H1 (cell line): ENCODE measurements at regions of chr13 and their contacts with region 1.

Region 1: GRCh38 chr13:21326155-21327031 is 132.7 kb downstream of the ZDHHC20 start:
- DNase-seq: peak; percentile 69 to 83
- H3K4me3 ChIP-seq: peak overlapping the region; percentile 37 to 60 (median 48)
- H3K27ac ChIP-seq: peak overlapping the region; percentile 88
- H3K4me1 ChIP-seq: peaks cover 19 to 32% (median 21%) of the 10 kb centered on the region in 4 experiments
- H3K27me3 ChIP-seq: peaks cover 0 to 2% (median 0%) of the 10 kb centered on the region in 4 experiments; a peak in 2 of 7 replicates
- CTCF ChIP-seq: no peak
- EP300 ChIP-seq: 0 out of 3 replicates have a peak, but pooled peaks of 1 of the 2 experiments have one; percentile 45
- POLR2A ChIP-seq: peak; percentile 57 to 83
- RAD21 ChIP-seq: peak in 1 of 2 experiments; percentile 30; a peak in 2 of 4 replicates

Region 2: GRCh38 chr13:21310221-21310620 is 16.2 kb before region 1 on chr13:
- CTCF ChIA-PET with region 1: interaction called, 10 read pairs
- POLR2A ChIA-PET with region 1: interaction called, 16 read pairs
- DNase-seq: no peak
- H3K4me3 ChIP-seq: no peak overlapping the region
- H3K27ac ChIP-seq: no peak overlapping the region
- H3K4me1 ChIP-seq: peaks cover 2 to 5% (median 3%) of the 10 kb centered on the region in 4 experiments; a peak in 4 of 7 replicates
- H3K27me3 ChIP-seq: no peaks in the 10 kb centered on the region
- CTCF ChIP-seq: no peak
- EP300 ChIP-seq: no peak
- POLR2A ChIP-seq: no peak
- RAD21 ChIP-seq: no peak

Region 3: DNA sequence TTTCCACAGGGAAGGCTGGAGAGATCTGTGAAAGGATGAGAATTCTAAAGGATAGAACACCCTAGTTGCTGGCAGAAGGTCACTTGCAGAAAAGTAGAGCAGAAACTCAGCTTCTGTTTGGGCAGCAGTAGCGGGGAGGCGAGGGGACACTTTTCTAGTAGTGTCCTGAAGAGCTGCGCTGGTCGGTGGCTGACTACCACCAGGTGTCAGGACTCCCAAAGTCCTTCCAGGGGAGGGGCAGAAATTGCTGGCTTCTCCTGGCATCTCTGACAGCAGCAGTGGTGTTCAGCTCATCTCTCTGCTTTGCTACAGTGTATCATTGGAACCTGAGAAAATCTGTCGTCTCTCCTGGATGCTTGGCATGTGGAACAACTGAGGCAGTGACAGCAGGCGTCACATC is 11.8 kb after region 1 on chr13:
- CTCF ChIA-PET with region 1: interaction called, 14 read pairs
- POLR2A ChIA-PET with region 1: interaction called, 68 read pairs
- DNase-seq: no peak
- H3K4me3 ChIP-seq: no peak overlapping the region
- H3K27ac ChIP-seq: no peak overlapping the region
- H3K4me1 ChIP-seq: peaks cover 3 to 22% (median 14%) of the 10 kb centered on the region in 4 experiments
- H3K27me3 ChIP-seq: no peaks in the 10 kb centered on the region; a peak in 1 of 7 replicates
- CTCF ChIP-seq: peak; percentile 19 to 46 (median 20); a peak in 2 of 4 replicates
- EP300 ChIP-seq: no peak
- POLR2A ChIP-seq: no peak
- RAD21 ChIP-seq: peak; percentile 22 to 42; a peak in 3 of 4 replicates

Region 4: GRCh38 chr13:21458813-21459701 is 132.7 kb after region 1 on chr13 and contains the start of gene ZDHHC20:
- CTCF ChIA-PET with region 1: no interaction called
- POLR2A ChIA-PET with region 1: interaction called, 13 read pairs
- DNase-seq: peak; percentile 46 to 98
- H3K4me3 ChIP-seq: peak within 1 kb of the TSS; percentile 87 to 99 (median 97)
- H3K27ac ChIP-seq: peak within 1 kb of the TSS; percentile 94
- H3K4me1 ChIP-seq: peaks cover 0 to 12% (median 6%) of the 10 kb centered on the region in 4 experiments; a peak in 4 of 7 replicates
- H3K27me3 ChIP-seq: no peaks in the 10 kb centered on the region
- CTCF ChIP-seq: no peak
- EP300 ChIP-seq: no peak
- POLR2A ChIP-seq: peak; percentile 38 to 60; a peak in 2 of 3 replicates
- RAD21 ChIP-seq: no peak
- total RNA-seq, gene ZDHHC20: 80.7 and 89.0 TPM in 2 replicates

Region 5: DNA sequence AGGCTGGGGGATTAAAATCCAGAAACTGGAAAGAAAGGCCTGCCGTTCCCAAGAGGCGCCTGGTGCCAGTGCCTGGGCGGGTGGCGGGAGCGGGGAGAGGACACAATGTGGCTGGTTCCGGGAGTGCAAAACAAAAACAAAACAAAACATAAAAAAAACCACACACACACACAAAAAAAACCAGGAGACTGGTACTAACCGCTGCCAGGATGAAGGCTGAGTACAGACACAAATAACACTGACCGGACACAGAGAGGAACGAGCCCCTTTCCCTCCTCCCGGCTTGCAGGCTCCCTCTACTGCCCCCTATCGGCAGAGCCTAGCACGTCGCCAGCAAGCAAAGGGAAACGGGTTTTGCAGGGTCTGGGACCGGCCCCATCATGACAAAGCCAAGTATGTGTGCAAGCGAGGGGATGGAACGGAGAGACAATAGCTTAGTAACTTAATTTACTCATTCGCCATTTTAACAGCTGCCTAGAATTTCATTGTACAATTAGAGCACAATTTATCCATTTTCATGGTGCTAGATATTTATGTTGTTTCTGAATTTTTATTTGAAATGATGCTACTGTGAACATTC is 150.6 kb after region 1 on chr13:
- CTCF ChIA-PET with region 1: interaction called, 13 read pairs
- POLR2A ChIA-PET with region 1: no interaction called
- DNase-seq: peak; percentile 90 to 96
- H3K4me3 ChIP-seq: peak overlapping the region; percentile 19 to 54 (median 28); a peak in 5 of 8 replicates
- H3K27ac ChIP-seq: no peak overlapping the region
- H3K4me1 ChIP-seq: 0 out of 7 replicates have a peak, but pooled peaks cover 0 to 2% (median 0%) of the 10 kb centered on the region in 4 experiments
- H3K27me3 ChIP-seq: no peaks in the 10 kb centered on the region
- CTCF ChIP-seq: peak; percentile 86 to 98 (median 95)
- EP300 ChIP-seq: 0 out of 3 replicates have a peak, but pooled peaks of 1 of the 2 experiments have one; percentile 38
- POLR2A ChIP-seq: peak in 1 of 2 experiments; percentile 40; a peak in 1 of 3 replicates
- RAD21 ChIP-seq: peak; percentile 82 to 87